Left colon (tissue), 2 donors: ENCODE measurements at regions of chr5 and their contacts with region 1.

Region 1: GRCh38 chr5:76402886-76403765 is at the start of gene IQGAP2:
- DNase-seq: peak; percentile 75 to 85
- ATAC-seq: peak; percentile 78
- total RNA-seq, gene IQGAP2: 104 to 123 TPM

Region 2: GRCh38 chr5:76230711-76231285 is 172.3 kb before region 1 on chr5:
- intact Hi-C with region 1: no loop called
- DNase-seq: no peak
- ATAC-seq: peak; percentile 53

Region 3: DNA sequence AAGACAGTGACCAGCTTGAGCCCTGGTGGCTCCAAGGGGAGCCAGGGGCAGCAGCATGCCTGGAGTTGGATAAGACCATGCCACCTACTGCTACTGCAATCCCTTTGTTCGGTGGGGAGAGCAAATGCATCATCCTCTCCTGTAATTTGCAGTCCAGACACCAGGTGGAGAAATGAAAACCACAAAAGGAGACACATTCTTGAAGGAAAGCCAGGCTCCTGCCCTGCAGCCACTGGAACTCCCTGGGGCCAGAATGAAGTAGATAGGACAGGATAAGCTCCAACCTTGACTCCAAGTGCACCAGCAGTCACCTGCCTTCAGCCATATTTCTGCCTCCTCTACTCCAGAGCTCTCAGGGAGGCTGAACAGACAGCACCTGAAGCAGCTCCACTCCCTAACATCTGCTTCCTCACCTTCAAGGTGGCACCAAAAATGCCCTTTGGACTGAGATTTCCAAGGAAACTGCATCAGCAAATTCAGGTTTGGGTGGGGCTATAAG is 65.1 kb before region 1 on chr5:
- intact Hi-C with region 1: no loop called
- DNase-seq: peak; percentile 32 to 46
- ATAC-seq: peak; percentile 96

Region 4: GRCh38 chr5:76544268-76544926 is 141.3 kb after region 1 on chr5:
- intact Hi-C with region 1: loop called in 1 of 2 experiments (anchors 10 kb)
- DNase-seq: peak; percentile 61 to 71
- ATAC-seq: peak; percentile 85